ENCODE measurements at regions of chr3 and their contacts with region 1.

Region 1: DNA sequence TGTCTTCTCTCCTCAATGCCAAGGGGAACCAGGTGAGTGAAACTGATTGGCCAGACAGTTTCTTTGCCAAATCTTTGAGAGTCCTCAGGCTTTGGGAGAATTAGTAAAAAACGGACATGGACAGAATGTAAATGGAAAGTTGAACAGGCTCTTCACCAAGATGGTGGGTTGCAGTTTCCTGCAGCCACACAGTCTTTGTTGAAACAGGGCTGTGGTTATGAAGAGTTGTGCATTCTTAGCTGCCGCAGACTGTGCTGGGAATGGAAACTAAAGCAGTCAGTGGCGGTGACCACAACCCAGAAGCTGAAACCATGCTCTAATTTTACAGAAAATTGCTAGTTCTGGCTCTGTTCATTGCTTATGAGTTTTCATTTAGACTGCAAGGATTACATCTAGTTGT is 42.1 kb upstream of the TASOR start:
- DNase-seq: peak; percentile 82
- H3K4me3 Mint-ChIP-seq: peak overlapping the region; percentile 49
- H3K27ac Mint-ChIP-seq: peak overlapping the region; percentile 83
- H3K4me1 Mint-ChIP-seq: peaks cover 34% of the 10 kb centered on the region
- H3K27me3 Mint-ChIP-seq: no peaks in the 10 kb centered on the region

Region 2: DNA sequence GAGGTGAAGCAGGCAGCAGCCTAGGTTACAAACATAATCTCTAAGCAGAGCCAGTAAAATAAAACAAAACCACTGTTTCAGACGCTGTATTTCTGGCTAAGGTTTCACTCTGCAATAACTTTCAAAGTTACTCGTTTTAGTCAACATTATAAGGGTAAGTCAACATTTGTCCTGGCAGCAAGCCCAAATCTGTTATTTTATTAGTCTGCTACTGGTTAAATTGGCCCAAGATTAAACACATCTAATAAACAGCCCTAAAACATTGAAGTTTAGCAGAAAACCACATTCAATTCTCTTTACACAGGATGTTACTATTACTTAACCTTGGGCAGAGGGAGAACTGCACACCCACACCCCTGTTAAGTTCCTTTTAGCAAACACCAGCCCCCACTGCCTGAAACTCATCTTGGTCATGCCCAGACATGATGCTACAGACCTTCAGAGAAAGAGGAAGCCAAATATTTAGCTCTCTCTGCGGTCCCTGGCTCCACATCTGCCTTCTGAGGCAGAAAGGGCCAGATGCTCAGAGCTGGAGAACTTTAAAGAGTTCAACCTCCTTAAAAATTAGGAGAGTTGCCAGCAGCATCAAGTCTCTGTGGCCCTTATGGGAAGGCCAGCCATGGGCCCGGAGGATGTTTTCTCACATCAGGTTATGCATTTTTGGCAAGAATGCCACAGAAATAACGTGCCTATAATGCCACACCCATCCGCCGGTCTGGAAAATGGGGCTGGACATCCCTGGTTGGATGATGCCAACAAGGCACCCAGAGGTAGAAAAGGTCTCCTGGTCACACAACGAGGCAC is 58.7 kb after region 1 on chr3:
- CTCF ChIA-PET with region 1: no interaction called
- POLR2A ChIA-PET with region 1: interaction called, 21 read pairs
- DNase-seq: peak; percentile 81
- H3K4me3 Mint-ChIP-seq: peak overlapping the region; percentile 57
- H3K27ac Mint-ChIP-seq: peak overlapping the region; percentile 96
- H3K4me1 Mint-ChIP-seq: peaks cover 89% of the 10 kb centered on the region
- H3K27me3 Mint-ChIP-seq: no peaks in the 10 kb centered on the region

Region 3: DNA sequence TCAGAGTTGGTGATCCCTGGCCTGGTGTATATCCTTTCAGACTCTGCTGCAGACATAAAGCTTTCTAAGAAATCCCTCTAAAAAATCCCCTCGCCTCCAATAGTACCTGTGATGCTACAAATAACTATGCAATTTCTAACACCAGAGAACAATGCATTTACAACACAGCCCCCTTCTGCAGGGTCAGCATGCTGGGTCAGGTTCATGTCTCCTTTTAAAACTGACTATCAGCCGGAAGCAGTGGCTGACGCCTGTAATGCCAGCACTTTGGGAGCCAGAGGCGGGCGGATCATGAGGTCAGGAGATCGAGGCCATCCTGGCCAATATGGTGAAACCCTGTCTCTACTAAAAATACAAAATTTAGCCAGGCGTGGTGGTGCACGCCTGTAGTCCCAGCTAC is 258.3 kb after region 1 on chr3:
- CTCF ChIA-PET with region 1: no interaction called
- POLR2A ChIA-PET with region 1: no interaction called
- DNase-seq: no peak
- H3K4me3 Mint-ChIP-seq: no peak overlapping the region
- H3K27ac Mint-ChIP-seq: no peak overlapping the region
- H3K4me1 Mint-ChIP-seq: peaks cover 31% of the 10 kb centered on the region
- H3K27me3 Mint-ChIP-seq: no peaks in the 10 kb centered on the region